Vagina (tissue), 2 donors: ENCODE measurements at regions of chr2 and their contacts with region 1.

Region 1: GRCh38 chr2:19408592-19408991 is 50.2 kb upstream of the OSR1 start:
- DNase-seq: no peak
- H3K4me3 ChIP-seq: no peak overlapping the region
- H3K27ac ChIP-seq: no peak overlapping the region
- H3K4me1 ChIP-seq: no peaks in the 10 kb centered on the region
- H3K27me3 ChIP-seq: no peaks in the 10 kb centered on the region
- CTCF ChIP-seq: no peak
- POLR2A ChIP-seq: no peak

Region 2: GRCh38 chr2:19312949-19313348 is 95.6 kb before region 1 on chr2:
- intact Hi-C with region 1: loop called (anchors 5 kb)
- DNase-seq: no peak
- H3K4me3 ChIP-seq: no peak overlapping the region
- H3K27ac ChIP-seq: no peak overlapping the region
- H3K4me1 ChIP-seq: no peaks in the 10 kb centered on the region
- H3K27me3 ChIP-seq: no peaks in the 10 kb centered on the region
- CTCF ChIP-seq: no peak
- POLR2A ChIP-seq: no peak

Region 3: DNA sequence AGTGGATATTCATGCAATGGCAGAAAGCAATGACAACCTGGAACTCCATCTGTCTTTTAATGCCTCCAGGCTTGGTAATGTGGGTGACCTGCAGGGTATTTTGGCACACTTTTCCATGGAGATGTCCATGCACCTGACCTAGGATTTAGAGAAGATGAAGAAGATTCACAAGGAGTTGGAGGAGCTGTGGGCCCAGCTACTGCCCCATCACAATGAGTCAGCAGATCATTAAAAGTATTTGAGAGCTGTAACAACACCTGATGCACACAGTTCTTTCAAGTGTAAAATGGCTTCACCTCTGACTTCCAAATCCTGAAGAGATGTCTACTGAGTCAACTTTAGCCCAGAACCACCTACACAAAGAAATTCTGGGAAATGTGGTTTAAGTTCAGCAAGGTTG is 28.1 kb before region 1 on chr2:
- intact Hi-C with region 1: no loop called
- DNase-seq: no peak
- H3K4me3 ChIP-seq: no peak overlapping the region
- H3K27ac ChIP-seq: no peak overlapping the region
- H3K4me1 ChIP-seq: no peaks in the 10 kb centered on the region
- H3K27me3 ChIP-seq: no peaks in the 10 kb centered on the region
- CTCF ChIP-seq: no peak
- POLR2A ChIP-seq: no peak